ENCODE measurements at regions of chr17 and their contacts with region 1.

Region 1: DNA sequence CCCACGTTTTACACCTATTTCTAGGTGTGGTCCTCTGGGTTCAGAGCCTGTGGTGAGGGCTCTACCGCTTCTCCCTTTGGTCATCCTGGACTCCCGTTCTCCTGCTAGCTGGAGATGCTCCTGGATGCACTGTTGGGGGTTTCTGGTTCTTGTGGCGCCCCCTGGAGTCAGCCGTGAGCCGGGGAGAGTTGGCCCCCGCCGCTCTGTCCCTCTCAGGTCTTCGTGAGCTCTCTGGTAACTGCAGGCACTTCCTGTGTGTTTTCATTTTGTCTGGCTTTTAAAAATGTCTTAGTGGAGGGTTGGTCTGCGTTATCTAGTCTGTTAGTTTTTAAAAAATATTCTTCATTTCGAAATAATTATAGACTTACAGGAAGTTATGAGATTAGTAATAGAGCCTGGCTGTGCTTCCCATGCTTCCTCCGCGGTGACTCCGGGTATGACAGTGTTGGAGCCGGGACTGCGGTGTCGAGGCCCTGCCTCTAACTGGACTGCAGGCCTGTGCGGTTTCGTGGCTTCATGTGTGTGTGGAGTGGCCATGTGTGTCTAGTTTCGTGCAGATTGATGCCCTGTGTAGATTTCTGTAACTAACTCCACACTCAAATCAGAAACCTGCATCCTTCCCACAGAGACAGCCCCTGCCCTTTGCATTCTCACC is 78.0 kb upstream of the ZNF750 start:
- DNase-seq: peak in 5 of 7 donors; percentile 31 to 69 (median 44)
- H3K4me3 ChIP-seq: no peak overlapping the region
- H3K27ac ChIP-seq: peak overlapping the region in 1 of 5 donors; percentile 43
- H3K4me1 ChIP-seq: no peaks in the 10 kb centered on the region
- H3K27me3 ChIP-seq: no peaks in the 10 kb centered on the region
- CTCF ChIP-seq: peak in 5 of 6 experiments; percentile 22 to 51 (median 43)
- POLR2A ChIP-seq: no peak

Region 2: GRCh38 chr17:82781894-82782274 is 135.9 kb before region 1 on chr17:
- intact Hi-C with region 1: loop called (anchors 5 kb)
- DNase-seq: peak; percentile 76 to 92 (median 83)
- H3K4me3 ChIP-seq: no peak overlapping the region
- H3K27ac ChIP-seq: peak overlapping the region in 2 of 5 donors; percentile 17 to 42
- H3K4me1 ChIP-seq: no peaks in the 10 kb centered on the region
- H3K27me3 ChIP-seq: no peaks in the 10 kb centered on the region
- CTCF ChIP-seq: peak; percentile 81 to 98 (median 96)
- POLR2A ChIP-seq: no peak

Region 3: DNA sequence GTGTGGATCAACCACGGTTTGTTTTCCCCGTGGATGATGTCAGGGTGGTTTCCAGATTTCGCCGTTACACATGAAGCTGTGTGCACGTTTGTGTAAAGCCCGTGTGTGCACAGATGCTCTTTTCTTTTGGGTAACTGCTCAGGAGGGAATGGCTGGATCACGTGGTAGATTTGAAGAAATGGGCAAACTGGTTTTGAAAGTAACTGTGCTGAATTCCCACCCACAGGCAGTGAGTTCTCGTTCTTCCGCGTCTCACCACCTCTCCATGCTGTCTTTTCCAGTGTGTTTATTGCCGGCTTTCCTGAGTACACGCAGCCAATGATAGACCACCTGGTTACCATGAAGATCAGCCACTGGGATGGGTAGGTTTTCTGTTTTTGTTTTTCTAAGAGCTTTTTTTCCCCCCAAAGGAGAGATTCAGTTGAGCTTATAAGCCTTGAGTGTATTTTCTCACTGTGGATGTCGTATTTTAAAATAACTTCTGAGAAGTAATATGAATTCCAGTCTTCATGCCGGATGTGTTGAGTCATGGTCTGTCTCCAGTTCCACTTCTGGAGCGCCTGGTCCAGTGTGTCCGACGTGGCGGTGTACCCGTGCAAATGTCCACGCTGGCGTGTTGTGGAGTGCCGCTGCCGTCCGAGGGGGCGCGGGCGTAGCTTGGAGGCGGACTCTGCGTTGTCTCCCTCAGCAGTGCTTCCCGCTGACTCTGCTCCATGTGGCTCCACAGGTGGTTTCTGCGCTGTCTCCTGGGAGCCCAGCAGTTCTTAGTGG is 17.3 kb before region 1 on chr17:
- intact Hi-C with region 1: no loop called
- DNase-seq: no peak
- H3K4me3 ChIP-seq: no peak overlapping the region
- H3K27ac ChIP-seq: no peak overlapping the region
- H3K4me1 ChIP-seq: no peaks in the 10 kb centered on the region
- H3K27me3 ChIP-seq: no peaks in the 10 kb centered on the region
- CTCF ChIP-seq: no peak
- POLR2A ChIP-seq: no peak

Region 4: GRCh38 chr17:83051395-83052233 is 133.8 kb after region 1 on chr17:
- intact Hi-C with region 1: no loop called
- DNase-seq: peak; percentile 97 to 98 (median 97)
- H3K4me3 ChIP-seq: peak overlapping the region in 3 of 4 donors; percentile 33 to 82 (median 60)
- H3K27ac ChIP-seq: peak overlapping the region in 4 of 5 donors; percentile 71 to 92 (median 82)
- H3K4me1 ChIP-seq: peaks cover 9 to 14% of the 10 kb centered on the region in 2 donors
- H3K27me3 ChIP-seq: no peaks in the 10 kb centered on the region
- CTCF ChIP-seq: peak in 1 of 6 experiments; percentile 16
- POLR2A ChIP-seq: peak; percentile 62 to 76